BJ (cell line): ENCODE measurements at regions of chr12 and their contacts with region 1.

Region 1: DNA sequence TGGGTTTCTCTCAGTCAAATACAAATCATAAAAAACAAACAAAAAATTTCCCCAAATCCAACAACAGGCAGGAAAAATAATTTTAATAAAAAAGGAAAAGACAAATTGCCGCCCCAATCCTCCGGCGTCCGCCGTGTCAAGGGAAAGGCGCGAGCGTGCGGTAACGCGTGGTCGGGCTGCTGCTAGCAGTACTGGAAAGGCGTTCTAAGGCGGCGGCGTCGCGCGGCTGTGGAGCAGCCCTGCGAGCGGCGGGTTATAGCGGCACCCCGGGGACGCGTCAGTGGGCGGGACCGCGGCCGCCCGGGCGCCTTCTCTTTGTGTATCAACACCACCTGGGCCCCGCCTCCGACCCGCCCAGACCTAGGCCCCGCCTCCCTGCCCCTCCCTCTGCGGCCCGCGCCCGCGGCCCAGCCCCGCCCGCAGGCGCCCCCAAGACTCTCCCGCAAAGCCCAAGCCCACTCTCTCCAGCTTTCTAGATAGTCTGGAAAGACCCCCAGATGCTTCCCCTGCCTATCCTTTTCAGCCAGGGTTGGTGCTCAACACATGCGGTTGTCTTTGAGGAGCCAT is at the start of gene SLC38A2:
- DNase-seq: peak; percentile 61
- H3K4me3 ChIP-seq: peak within 1 kb of the TSS; percentile 65
- H3K27me3 ChIP-seq: no peaks in the 10 kb centered on the region
- CTCF ChIP-seq: no peak
- polyA plus RNA-seq, gene SLC38A2: 472 and 596 TPM in 2 replicates

Region 2: DNA sequence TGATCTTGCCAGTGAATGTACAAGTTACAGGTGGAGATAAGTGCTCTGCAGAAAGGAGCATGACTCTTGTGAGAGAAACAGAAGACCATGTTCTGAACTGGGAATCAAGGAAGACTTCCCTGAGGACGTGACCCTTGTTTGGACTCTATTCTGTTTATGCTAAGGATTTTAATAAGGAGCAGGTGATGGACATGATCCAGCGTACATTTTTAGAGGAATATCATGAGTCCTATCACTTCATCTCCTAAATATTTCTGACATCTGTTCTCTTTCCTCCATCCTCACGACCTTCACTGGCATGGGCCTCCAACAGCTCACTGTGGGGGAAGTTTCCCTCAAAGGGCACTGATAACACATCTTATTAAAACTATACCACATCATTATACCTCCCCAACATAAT is 95.9 kb before region 1 on chr12:
- CTCF ChIA-PET with region 1: no interaction called
- POLR2A ChIA-PET with region 1: interaction called, 13 read pairs
- DNase-seq: no peak
- H3K4me3 ChIP-seq: no peak overlapping the region
- H3K27me3 ChIP-seq: no peaks in the 10 kb centered on the region
- CTCF ChIP-seq: no peak

Region 3: DNA sequence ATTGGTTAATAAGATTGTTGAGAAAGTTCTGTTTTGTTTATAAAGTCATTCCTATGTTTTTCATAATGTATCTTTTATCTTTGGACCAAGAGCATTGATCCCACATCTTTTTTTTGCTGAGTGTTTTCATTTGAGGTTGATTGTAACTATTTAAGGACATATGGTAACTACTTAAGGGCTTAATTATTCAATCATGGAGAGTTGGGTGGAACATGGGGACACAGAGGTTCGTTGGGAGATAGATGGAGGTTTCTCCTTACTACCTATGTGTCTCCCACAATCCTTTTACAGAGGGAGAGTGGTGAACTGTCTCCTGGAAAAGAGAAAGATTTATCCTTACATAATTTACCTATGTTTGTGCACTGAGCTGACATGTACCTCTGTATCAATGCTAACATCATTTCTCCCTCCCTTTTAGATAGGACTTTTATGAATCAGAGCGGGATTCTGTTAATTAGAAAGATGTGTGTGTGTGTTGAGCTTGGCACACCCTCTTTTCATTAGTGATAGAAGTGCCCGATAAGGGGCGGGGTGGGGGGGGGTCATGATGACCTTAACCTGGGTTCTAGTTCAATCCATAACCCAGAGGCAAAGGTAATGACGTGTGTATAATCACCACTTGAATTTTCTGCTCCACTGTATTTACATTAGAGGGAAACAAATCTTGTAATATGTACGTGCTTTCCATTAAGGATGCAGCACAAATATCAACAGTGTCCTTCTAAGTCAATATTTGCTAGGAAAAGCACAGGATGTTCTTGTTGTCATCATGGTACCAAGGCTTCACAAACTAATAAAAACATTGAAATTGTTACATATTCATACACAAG is 120.9 kb after region 1 on chr12:
- CTCF ChIA-PET with region 1: no interaction called
- POLR2A ChIA-PET with region 1: interaction called, 16 read pairs
- DNase-seq: no peak
- H3K4me3 ChIP-seq: peak overlapping the region; percentile 15; the same call in 1 of the 2 replicates
- H3K27me3 ChIP-seq: no peaks in the 10 kb centered on the region
- CTCF ChIP-seq: no peak

Region 4: GRCh38 chr12:46573347-46573658 is 200.7 kb after region 1 on chr12:
- CTCF ChIA-PET with region 1: no interaction called
- POLR2A ChIA-PET with region 1: interaction called, 11 read pairs
- DNase-seq: no peak
- H3K4me3 ChIP-seq: no peak overlapping the region
- H3K27me3 ChIP-seq: no peaks in the 10 kb centered on the region
- CTCF ChIP-seq: no peak